Mammary epithelial cell (primary cell): ENCODE measurements at regions of chr6 and their contacts with region 1.

Region 1: DNA sequence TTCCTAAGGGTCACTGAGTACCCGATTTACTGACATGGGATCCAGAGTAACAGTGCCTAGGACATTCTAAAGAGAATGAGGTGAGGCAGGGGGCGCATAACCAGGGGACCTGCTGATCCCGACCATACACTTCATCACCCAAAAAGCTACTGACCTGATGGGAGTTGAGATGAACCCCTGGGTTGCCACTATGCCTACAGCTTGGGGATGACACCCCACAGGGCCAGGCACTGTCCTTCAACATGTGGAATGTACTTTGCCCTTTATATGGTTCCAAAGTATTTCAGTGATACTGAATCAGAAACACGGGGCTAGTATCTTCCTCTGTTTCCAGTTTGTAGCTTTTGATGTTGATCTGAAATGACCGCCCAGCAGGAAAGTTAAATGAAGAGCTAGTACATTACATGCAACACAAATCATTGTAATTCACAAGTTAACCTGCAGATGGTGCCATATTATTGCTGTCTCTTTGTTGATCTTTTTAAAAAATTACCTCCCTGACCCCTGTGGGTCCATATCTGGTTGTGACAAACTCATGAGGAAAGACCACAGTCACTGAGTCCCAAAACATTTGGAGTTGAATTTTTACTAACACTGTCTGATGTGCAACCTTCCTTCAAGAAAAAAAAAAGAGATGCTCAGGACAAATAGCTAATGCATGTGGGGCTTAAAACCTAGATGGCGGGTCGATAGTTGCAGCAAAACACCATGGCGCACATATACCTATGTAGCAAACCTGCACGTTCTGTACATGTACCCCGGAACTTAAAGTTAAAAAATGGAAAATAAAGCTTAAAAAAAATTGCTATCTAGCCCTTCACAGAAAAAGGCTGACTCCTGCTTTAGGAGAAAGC is 42.7 kb upstream of the GCNT2 start:
- DNase-seq: peak; percentile 30
- H3K4me3 ChIP-seq: no peak overlapping the region
- H3K27ac ChIP-seq: no peak overlapping the region
- H3K4me1 ChIP-seq: peaks cover 14% of the 10 kb centered on the region
- H3K27me3 ChIP-seq: no peaks in the 10 kb centered on the region
- CTCF ChIP-seq: peak; percentile 53 to 54

Region 2: GRCh38 chr6:10460096-10460495 is 18.3 kb before region 1 on chr6:
- CTCF ChIA-PET with region 1: no interaction called
- dilution Hi-C with region 1: no loop called
- in situ Hi-C with region 1: no loop called
- intact Hi-C with region 1: no loop called
- DNase-seq: no peak
- H3K4me3 ChIP-seq: no peak overlapping the region
- H3K27ac ChIP-seq: no peak overlapping the region
- H3K4me1 ChIP-seq: no peaks in the 10 kb centered on the region
- H3K27me3 ChIP-seq: no peaks in the 10 kb centered on the region
- CTCF ChIP-seq: no peak

Region 3: GRCh38 chr6:10522929-10523573 is 44.6 kb after region 1 on chr6:
- CTCF ChIA-PET with region 1: interaction called, 11 read pairs
- dilution Hi-C with region 1: no loop called
- in situ Hi-C with region 1: no loop called
- intact Hi-C with region 1: no loop called
- DNase-seq: no peak
- H3K4me3 ChIP-seq: no peak overlapping the region
- H3K27ac ChIP-seq: no peak overlapping the region
- H3K4me1 ChIP-seq: no peaks in the 10 kb centered on the region
- H3K27me3 ChIP-seq: no peaks in the 10 kb centered on the region
- CTCF ChIP-seq: no peak

Region 4: DNA sequence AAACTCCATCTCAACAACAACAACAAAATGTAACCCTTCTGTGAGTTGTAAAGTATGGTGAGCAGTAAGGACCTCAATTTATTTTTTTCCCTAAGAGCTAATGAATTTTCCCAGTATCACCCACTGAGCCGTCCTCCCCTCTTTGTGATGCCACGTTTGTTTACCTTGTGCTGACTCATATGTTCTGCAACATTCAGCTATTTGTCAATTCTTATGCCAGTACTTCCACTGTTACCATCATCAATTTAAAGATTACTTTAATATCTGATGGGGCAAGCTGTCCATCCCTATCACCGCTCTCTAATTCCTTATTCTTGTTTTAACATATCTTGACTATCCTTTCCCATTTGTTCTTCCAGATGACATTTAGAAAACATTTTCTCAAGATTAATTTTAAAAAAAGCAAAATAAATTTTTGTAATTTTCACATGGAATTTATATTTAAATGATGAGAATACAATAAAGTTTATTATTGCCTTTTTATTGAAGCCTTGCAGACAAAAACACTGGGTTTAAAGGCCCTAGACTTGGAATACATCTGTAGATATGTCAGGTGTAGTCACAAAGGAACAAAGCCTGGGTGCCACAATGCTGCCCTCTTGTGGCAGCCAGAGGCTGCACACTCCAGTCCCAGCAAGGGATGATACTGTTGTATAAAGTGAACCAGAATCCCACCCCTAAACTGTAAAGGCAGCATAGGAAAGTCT is 322.6 kb after region 1 on chr6:
- CTCF ChIA-PET with region 1: interaction called, 6 read pairs
- dilution Hi-C with region 1: no loop called
- in situ Hi-C with region 1: no loop called
- intact Hi-C with region 1: loop called (anchors 1 kb)
- DNase-seq: peak; percentile 43
- H3K4me3 ChIP-seq: no peak overlapping the region
- H3K27ac ChIP-seq: no peak overlapping the region
- H3K4me1 ChIP-seq: peaks cover 6% of the 10 kb centered on the region
- H3K27me3 ChIP-seq: no peaks in the 10 kb centered on the region
- CTCF ChIP-seq: peak; percentile 98 to 99

Region 5: DNA sequence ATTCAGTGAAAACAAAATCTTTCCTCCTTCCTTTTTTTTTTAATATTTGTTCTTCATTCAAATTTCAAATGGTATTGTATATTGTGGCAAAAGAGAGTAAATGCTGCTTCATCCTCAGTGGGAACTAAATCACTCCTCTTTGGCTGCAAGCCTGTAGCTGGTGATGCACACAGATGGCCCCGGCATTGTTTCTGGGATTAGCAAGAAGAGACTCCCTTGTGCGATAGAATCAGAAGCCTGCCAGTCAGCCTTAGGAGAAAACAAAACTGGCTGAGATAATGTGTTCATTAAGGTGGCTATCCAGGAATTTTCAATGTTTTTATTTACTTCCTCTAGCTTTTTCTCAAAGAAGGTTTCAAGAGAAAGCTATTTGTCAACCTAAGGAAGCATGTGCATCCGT is 586.4 kb after region 1 on chr6:
- CTCF ChIA-PET with region 1: interaction called, 5 read pairs
- dilution Hi-C with region 1: no loop called
- in situ Hi-C with region 1: no loop called
- intact Hi-C with region 1: loop called (anchors 1 kb)
- DNase-seq: no peak
- H3K4me3 ChIP-seq: no peak overlapping the region
- H3K27ac ChIP-seq: no peak overlapping the region
- H3K4me1 ChIP-seq: no peaks in the 10 kb centered on the region
- H3K27me3 ChIP-seq: no peaks in the 10 kb centered on the region
- CTCF ChIP-seq: no peak